Calu3 (cell line): ENCODE measurements at regions of chr14 and their contacts with region 1.

Region 1: DNA sequence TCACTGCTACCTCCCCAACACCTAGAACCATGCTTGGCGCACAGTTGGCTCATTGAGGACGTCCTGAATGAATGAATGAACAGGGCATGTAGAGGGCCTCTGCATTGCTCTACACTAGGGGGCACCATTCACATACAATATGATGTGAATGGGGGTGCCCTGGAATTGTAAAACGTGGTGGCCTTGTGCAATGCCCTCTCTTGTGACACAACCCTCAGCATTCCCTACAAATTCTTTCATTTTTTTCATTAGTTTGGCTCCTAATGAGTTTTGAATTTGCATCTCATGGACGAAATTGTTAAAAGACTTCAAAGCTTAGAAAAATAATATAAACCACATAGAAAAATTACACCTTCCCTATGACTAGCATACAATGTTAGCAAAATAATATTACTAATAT is 2.3 kb upstream of the DIO2 start:
- DNase-seq: peak; percentile 61
- H3K4me3 Mint-ChIP-seq: no peak overlapping the region
- H3K27ac Mint-ChIP-seq: no peak overlapping the region
- H3K4me1 Mint-ChIP-seq: no peaks in the 10 kb centered on the region
- H3K27me3 Mint-ChIP-seq: peaks cover 8% of the 10 kb centered on the region
- CTCF ChIP-seq: peak; percentile 41

Region 2: DNA sequence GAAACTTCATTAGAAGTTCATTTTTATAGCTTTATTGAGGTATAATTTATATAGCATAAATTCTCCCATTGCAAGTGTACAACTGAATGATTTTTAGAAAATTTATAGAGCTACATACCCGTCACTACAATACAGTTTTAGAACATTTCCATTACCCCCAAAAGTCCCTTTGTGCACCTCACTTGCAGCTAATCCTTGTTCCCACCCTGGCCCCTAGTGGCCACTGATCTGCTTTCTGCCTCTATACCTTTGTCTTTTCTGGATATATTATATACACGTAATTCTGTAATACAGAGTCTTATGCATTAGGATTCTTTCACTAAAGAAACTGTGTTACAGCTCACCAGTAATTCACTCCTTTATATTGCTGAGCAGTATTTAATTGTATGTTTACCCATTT is 142.8 kb after region 1 on chr14:
- CTCF ChIA-PET with region 1: no interaction called
- intact Hi-C with region 1: loop called (anchors 5 kb)
- DNase-seq: peak; percentile 5
- H3K4me3 Mint-ChIP-seq: no peak overlapping the region
- H3K27ac Mint-ChIP-seq: no peak overlapping the region
- H3K4me1 Mint-ChIP-seq: no peaks in the 10 kb centered on the region
- H3K27me3 Mint-ChIP-seq: no peaks in the 10 kb centered on the region
- CTCF ChIP-seq: no peak

Region 3: GRCh38 chr14:80587075-80587724 is 373.6 kb after region 1 on chr14:
- CTCF ChIA-PET with region 1: interaction called, 7 read pairs
- intact Hi-C with region 1: loop called (anchors 1 kb)
- DNase-seq: no peak
- H3K4me3 Mint-ChIP-seq: no peak overlapping the region
- H3K27ac Mint-ChIP-seq: no peak overlapping the region
- H3K4me1 Mint-ChIP-seq: peaks cover 30% of the 10 kb centered on the region
- H3K27me3 Mint-ChIP-seq: no peaks in the 10 kb centered on the region
- CTCF ChIP-seq: peak; percentile 15

Region 4: DNA sequence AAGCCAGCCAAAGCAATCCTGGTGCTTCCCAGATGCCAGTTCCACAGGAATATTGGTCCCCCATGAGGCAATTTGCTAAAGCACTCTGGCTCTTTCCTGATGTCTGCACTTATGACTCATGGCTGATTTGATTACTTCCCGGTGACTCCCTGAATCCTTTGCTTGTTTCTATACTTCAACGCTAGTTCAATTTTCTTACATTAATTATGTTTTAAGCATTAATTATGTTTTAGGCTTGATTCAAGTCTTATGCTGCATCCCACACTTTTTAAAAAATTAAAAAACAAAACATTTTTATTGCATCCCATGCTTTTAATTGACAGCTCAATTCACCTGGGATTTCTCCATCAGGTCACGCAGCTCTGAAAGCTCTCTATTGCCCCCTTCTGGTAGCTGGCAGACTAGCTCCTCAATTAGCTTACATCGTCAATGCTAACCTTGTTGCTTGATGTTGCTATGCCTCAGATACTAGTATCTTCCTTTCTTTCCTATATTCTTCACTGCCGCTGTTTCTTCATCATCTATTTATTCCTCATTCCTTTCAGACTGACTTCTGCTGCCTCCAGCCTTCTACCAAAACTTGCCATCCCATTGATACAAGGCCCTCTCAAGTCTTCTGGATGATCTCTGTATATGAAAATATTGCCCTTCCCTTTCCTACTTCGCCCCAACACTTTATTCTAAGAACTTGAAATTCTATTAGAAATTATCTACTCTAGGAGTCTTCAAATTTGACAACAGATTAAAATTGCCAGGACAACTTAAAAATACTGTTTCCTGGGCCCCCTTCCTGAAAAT is 773.8 kb after region 1 on chr14:
- CTCF ChIA-PET with region 1: no interaction called
- intact Hi-C with region 1: loop called (anchors 10 kb)
- DNase-seq: peak; percentile 66
- H3K4me3 Mint-ChIP-seq: no peak overlapping the region
- H3K27ac Mint-ChIP-seq: no peak overlapping the region
- H3K4me1 Mint-ChIP-seq: no peaks in the 10 kb centered on the region
- H3K27me3 Mint-ChIP-seq: peaks cover under 1% of the 10 kb centered on the region
- CTCF ChIP-seq: peak; percentile 62